Right ventricle myocardium inferior (tissue), 1 donor: ENCODE measurements at regions of chr10 and their contacts with region 1.

Region 1: DNA sequence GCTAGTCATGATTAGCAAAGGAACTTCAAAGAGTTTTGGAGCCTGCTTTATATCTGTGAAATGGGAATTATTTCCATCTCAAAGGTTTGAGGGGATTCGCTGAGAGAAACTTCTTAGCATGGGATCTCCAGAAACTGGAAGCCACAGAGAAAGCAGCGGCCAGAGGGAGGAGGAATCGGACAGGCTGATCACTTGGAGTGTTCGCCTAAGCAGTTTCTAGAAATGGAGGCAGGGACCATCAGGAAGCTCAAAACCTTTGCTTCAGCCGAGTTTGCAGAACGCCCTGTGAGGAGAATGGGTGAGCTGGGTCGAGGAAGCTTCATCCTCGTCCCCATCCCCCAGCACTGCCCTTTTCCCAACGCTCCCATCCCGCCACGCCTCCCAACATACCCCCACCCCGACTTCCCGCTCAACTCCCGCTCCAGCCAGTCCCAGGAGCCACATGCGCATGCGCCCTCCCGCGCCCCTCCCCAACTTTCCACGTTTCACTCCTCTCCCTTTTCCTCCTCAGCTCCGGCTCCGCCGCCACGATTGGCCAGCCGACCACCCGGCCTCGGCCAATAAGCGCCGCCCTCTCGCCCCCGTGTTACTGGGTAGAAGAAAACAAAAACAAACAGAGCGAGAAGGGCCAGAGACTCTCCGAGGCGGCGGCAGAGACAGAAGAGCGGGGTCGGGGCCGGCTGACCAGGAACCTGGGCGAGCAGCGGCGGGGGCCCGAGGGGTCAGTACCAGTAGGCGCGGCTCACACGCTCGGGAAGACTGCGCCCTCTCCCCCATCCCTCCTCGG is at the start of gene PDCD4:
- DNase-seq: peak; percentile 100
- ATAC-seq: peak; percentile 96
- total RNA-seq, gene PDCD4: 71.6 TPM

Region 2: GRCh38 chr10:110758898-110759297 is 112.6 kb before region 1 on chr10:
- intact Hi-C with region 1: loop called (anchors 5 kb)
- DNase-seq: no peak
- ATAC-seq: no peak

Region 3: DNA sequence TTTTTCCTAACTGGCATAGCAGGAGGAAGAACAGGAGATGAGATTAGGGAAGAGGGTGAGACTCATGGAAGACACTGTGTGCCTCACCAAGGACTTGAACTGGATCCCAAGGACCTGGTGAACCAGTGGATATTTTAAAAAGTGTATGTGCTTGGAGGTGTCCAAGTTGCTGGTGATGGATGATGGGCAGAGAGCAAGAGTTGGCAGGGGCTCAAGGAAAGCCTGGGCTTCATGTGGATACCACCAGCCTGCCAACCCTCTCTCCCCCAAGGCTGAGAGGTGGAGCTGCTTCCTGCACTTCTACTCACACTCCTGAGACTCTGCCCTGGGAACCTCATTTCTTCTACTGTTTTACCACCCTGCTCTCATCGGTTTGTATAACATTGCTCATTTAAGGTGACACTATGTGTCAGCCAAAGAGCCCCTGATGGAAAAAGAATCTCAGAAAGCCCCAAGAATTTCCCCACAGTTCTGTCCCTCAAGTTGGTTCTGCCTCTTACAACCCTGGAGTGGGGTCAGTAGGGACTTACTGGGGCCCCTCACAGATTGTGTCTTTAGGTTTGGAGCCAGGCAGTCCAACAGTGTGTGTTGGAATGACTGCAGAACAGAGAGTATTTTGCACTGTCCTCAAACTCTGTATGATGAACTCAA is 56.0 kb before region 1 on chr10:
- intact Hi-C with region 1: loop called (anchors 5 kb)
- DNase-seq: no peak
- ATAC-seq: peak; percentile 58